ENCODE measurements at regions of chr17 and their contacts with region 1.

Region 1: DNA sequence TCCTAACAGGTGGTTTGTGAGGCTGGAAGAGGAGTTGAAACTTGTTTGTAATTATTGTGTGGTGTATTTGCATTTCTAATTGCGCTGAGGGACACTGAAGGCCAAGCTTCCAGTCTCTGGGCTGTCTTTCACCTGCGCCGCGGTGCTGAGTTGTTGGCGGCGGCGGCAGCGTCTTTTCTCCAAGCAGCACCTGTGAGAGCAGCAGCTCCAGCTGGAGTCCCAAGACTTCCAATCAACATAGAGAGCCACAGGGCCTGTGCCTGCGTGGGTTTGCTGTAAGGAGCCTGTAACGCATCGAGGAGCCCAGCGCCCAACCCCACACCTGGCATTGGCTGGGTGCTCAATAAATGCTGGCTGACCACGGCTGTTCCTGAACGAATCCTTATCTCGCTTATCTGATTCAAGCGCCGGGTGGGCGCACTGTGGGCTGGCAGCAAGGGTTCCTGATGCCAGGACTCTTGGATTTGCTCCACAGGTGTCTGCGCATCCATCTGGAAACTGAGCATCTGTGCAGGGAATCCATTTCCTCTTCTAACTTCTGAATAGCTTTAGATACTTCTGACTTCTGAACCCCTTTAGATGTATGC is 138.1 kb downstream of the ASIC2 start:
- DNase-seq: no peak
- ATAC-seq: no peak
- H3K4me3 ChIP-seq: no peak overlapping the region
- H3K27ac ChIP-seq: no peak overlapping the region
- H3K4me1 ChIP-seq: no peaks in the 10 kb centered on the region
- H3K27me3 ChIP-seq: no peaks in the 10 kb centered on the region

Region 2: DNA sequence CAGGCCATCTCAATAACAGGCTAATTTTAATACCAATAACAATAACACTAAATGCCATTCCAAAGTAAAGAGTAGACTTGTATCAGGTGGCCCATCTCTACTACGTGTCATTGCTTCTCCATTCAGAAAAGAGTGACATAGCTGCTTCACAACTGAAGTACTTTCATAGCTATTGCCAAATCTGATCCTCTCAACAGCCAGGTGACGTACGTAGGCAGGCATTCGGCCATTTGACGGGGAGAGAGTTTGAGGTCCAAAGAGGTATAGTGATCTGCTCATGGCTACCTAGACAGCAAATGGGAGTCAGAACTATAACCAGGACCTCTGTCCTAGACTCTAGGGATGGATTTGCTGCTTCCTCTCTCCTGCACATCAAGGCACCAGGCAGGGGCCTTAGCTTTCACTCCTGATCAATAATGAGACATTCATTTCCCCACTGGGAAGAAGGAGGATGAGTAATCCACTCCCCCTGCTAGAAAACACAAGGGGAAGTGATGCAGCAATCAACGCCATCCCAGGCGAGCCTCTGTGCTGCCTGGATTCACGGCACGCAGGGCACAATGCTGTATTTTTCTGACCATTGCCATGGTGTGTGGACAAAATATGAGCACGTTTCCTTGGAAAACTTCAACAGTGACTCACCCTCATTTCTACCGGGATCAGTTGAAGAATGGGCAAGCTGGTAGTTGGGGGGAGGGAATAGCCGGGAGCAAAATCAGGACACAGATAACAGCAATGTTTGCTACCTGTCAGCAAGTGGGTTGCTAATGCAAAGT is 82.4 kb before region 1 on chr17:
- intact Hi-C with region 1: loop called in 1 of 2 experiments (anchors 10 kb)
- DNase-seq: no peak
- ATAC-seq: no peak
- H3K4me3 ChIP-seq: no peak overlapping the region
- H3K27ac ChIP-seq: no peak overlapping the region
- H3K4me1 ChIP-seq: no peaks in the 10 kb centered on the region
- H3K27me3 ChIP-seq: no peaks in the 10 kb centered on the region

Measured in aorta (tissue), 5 donors.